ENCODE measurements at regions of chr10 and their contacts with region 1.

Region 1: GRCh38 chr10:28538595-28538994 is 5.7 kb downstream of the WAC start:
- DNase-seq: no peak
- H3K4me3 ChIP-seq: no peak overlapping the region
- H3K27ac ChIP-seq: no peak overlapping the region
- H3K4me1 ChIP-seq: peaks cover 9% of the 10 kb centered on the region
- H3K27me3 ChIP-seq: no peaks in the 10 kb centered on the region
- CTCF ChIP-seq: no peak
- POLR2A ChIP-seq: no peak

Region 2: DNA sequence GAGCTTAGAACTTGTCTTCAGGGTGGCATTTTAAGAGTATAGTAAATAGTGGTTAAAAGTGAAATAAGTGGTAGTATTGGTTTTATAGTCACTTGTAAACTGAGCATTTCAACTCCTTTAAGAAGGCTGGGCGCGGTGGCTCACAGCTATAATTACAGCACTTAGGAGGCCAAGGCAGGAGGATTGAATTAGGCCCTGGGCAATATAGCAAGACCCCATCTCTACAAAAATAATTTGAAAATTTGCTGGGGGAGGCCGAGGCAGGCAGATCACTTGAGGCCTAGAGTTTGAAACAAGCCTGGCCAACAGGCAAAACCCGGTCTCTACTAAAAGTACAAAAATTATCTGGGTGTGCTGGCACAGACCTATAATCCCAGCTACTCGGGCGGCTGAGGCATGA is 74.3 kb after region 1 on chr10:
- CTCF ChIA-PET with region 1: no interaction called
- POLR2A ChIA-PET with region 1: interaction called, 7 read pairs
- dilution Hi-C with region 1: no loop called
- intact Hi-C with region 1: loop called (anchors 5 kb)
- DNase-seq: no peak
- H3K4me3 ChIP-seq: no peak overlapping the region
- H3K27ac ChIP-seq: no peak overlapping the region
- H3K4me1 ChIP-seq: no peaks in the 10 kb centered on the region
- H3K27me3 ChIP-seq: no peaks in the 10 kb centered on the region
- CTCF ChIP-seq: no peak
- POLR2A ChIP-seq: no peak

Measured in endothelial cell of umbilical vein (primary cell).